ENCODE measurements at regions of chr2 and their contacts with region 1.

Region 1: GRCh38 chr2:27050281-27050995 is 1.0 kb upstream of the AGBL5 start:
- DNase-seq: peak; percentile 95 to 96
- H3K4me3 ChIP-seq: peak overlapping the region; percentile 75 to 96
- H3K27ac ChIP-seq: peak overlapping the region; percentile 94 to 100
- H3K4me1 ChIP-seq: peaks cover 0 to 3% of the 10 kb centered on the region in 2 donors
- H3K27me3 ChIP-seq: no peaks in the 10 kb centered on the region
- CTCF ChIP-seq: peak; percentile 26 to 73 (median 60)
- POLR2A ChIP-seq: peak in 1 of 2 donors; percentile 11

Region 2: GRCh38 chr2:25602333-25602723 is 1448.1 kb before region 1 on chr2:
- intact Hi-C with region 1: no loop called
- DNase-seq: no peak
- H3K4me3 ChIP-seq: no peak overlapping the region
- H3K27ac ChIP-seq: no peak overlapping the region
- H3K4me1 ChIP-seq: no peaks in the 10 kb centered on the region
- H3K27me3 ChIP-seq: no peaks in the 10 kb centered on the region
- CTCF ChIP-seq: no peak
- POLR2A ChIP-seq: no peak

Region 3: DNA sequence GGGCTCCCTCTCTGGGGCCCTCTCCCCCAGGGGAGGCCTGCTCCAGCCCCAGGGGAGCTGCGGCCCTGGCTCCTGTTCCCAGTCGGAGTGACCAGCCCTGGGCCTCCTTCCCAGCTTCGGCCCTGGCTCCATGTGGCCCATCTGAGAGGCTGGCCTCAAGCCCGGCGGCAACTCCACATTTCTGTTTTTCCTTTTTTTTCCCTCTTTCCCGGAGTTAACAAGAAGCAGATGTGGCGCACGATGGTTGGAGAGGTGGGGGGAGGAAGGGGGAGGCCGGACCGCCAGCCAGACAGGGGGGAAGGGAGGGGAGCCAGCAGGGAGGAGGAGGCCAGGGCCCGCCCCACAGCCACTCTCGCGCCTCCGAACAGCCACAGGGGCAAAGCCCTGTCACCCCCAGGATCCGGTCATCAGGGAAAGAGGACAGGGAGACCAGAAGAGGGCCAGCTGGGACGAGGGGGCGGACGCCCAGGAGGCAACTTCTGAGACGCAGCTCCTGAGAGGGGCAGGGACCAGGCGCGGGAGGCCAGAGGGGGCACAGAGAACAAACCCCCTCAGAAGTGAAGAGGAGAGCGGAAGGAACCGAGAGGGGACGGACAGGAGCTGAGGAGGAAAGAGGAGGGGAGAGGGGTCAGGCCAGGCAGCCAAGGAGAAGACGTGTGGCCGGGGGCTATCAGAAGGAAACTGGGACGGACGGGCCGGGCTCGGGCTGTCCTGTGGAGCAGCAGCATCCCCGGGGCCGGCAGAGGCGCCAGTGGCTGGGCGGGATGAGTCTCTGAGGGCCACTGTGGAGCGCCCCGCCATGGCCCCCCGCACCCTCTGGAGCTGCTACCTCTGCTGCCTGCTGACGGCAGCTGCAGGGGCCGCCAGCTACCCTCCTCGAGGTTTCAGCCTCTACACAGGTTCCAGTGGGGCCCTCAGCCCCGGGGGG is 28.1 kb after region 1 on chr2 and contains the start of gene EMILIN1:
- intact Hi-C with region 1: loop called (anchors 2 kb)
- DNase-seq: peak; percentile 93 to 96
- H3K4me3 ChIP-seq: peak within 1 kb of the TSS; percentile 52 to 84
- H3K27ac ChIP-seq: peak within 1 kb of the TSS; percentile 92 to 98
- H3K4me1 ChIP-seq: peaks cover 5 to 14% of the 10 kb centered on the region in 2 donors
- H3K27me3 ChIP-seq: no peaks in the 10 kb centered on the region
- CTCF ChIP-seq: peak in 1 of 4 experiments; percentile 17
- POLR2A ChIP-seq: peak; percentile 41 to 70
- total RNA-seq, gene EMILIN1: 107 to 377 (median 224) TPM

Measured in uterus (tissue), 4 donors.